ENCODE measurements at regions of chr12 and their contacts with region 1.

Region 1: GRCh38 chr12:108562348-108563135 is at the start of gene ISCU:
- DNase-seq: peak; percentile 98
- ATAC-seq: peak; percentile 92 to 96
- total RNA-seq, gene ISCU: 241 to 261 TPM

Region 2: GRCh38 chr12:108232528-108232927 is 330.0 kb before region 1 on chr12:
- intact Hi-C with region 1: no loop called
- DNase-seq: no peak
- ATAC-seq: no peak

Region 3: GRCh38 chr12:108618079-108618952 is 55.8 kb after region 1 on chr12:
- intact Hi-C with region 1: loop called (anchors 1 to 5 kb)
- DNase-seq: peak; percentile 84
- ATAC-seq: peak; percentile 85 to 90

Region 4: GRCh38 chr12:108744021-108744897 is 181.7 kb after region 1 on chr12:
- intact Hi-C with region 1: no loop called
- DNase-seq: no peak
- ATAC-seq: no peak

Region 5: GRCh38 chr12:108803428-108804105 is 241.0 kb after region 1 on chr12:
- intact Hi-C with region 1: loop called in 1 of 2 experiments (anchors 5 kb)
- DNase-seq: peak; percentile 73
- ATAC-seq: peak; percentile 60 to 73

Region 6: GRCh38 chr12:108856428-108857157 is 294.1 kb after region 1 on chr12:
- intact Hi-C with region 1: loop called in 1 of 2 experiments (anchors 10 kb)
- DNase-seq: peak; percentile 87
- ATAC-seq: peak; percentile 41 to 51

Region 7: DNA sequence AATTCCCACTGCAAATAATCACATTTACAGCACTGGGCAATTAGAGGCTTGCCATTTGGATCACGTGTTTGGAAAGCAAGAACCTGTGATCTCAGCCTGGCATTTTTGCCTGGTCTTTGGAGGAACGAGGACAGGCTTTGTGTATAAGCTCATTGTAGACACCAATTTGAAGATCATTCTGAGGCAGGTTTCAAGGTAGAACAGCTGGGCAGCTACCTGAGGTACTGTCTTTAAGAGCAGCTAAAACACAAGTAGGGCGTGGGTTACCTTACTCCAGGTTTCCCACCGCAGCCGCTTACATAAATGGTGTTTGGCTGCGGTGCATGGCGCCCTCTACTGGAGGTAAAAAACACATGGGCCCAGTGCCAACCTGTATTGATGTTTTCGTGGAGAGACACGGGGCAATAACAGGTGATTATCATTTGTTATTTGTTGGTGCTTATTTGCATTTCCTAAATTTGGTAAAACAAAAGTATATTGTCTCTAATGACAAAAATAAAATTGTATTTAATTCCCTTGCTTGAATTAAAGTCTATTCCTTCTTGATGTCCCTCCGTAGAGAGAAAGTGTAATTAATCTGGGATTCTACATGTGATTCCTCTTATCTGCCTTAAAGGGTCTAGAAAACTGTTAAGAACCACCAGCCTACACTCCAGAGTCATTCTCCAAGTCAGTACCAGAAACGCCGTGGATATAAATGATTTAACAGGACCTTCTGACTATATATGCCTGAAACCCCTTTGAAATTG is 388.6 kb after region 1 on chr12:
- intact Hi-C with region 1: loop called in 1 of 2 experiments (anchors 5 kb)
- DNase-seq: peak; percentile 70
- ATAC-seq: peak; percentile 79 to 81

Region 8: GRCh38 chr12:109093022-109093918 is 530.7 kb after region 1 on chr12 and contains the start of gene ALKBH2:
- intact Hi-C with region 1: loop called (anchors 5 to 10 kb)
- DNase-seq: peak; percentile 96
- ATAC-seq: peak; percentile 74 to 77
- total RNA-seq, gene ALKBH2: 8.5 to 12.0 TPM